ENCODE measurements at regions of chr2 and their contacts with region 1.

Region 1: GRCh38 chr2:100381240-100381639 is 36.2 kb downstream of the CHST10 start:
- DNase-seq: peak; percentile 16
- H3K4me3 ChIP-seq: no peak overlapping the region
- H3K27me3 ChIP-seq: peaks cover 4% of the 10 kb centered on the region
- CTCF ChIP-seq: peak; percentile 91

Region 2: DNA sequence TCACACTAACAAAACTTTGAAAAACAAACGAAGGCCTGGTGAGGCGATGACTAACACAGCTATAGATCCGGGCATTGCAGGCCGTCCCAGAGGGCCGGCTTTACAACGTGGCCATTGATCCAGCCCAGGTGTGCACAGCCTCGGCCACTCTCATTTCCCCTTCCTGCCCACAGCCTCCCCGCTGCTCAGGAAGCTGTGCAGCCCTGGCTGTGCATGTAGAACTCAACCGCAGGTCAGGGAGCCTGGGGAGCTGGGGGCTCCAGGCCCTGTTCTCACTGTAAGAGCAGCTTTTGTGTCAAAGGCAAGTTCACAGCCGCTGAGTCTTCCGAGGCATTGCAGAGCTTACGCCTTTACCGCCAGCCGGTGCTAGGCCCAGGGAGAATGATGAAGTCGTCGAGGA is 146.1 kb before region 1 on chr2:
- CTCF ChIA-PET with region 1: no interaction called
- POLR2A ChIA-PET with region 1: no interaction called
- DNase-seq: no peak
- H3K4me3 ChIP-seq: no peak overlapping the region
- H3K27me3 ChIP-seq: no peaks in the 10 kb centered on the region
- CTCF ChIP-seq: no peak

Region 3: DNA sequence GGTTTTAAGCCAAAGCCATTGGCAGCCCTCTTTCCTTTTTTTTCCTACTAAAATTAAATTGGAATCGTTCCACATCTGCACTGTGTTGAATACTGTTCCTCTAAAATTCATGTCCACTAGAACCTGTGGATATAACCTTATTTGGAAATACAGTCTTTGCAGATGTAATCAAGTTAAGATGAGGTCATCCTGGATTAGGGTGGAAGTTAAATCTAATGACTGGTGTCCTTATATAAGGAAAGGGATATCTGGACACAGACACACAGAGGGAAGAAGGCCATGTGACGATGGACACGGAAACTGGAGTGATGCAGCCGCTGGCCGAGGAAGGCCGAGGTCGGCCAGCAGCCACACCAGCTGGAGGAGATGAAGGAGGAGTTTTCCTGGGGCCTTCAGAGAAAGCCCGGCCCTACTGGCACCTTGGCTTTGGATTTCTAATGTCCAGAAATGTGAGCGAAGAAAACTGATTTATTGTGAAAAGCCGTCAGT is 108.4 kb before region 1 on chr2:
- CTCF ChIA-PET with region 1: interaction called, 224 read pairs
- POLR2A ChIA-PET with region 1: no interaction called
- DNase-seq: no peak
- H3K4me3 ChIP-seq: no peak overlapping the region
- H3K27me3 ChIP-seq: no peaks in the 10 kb centered on the region
- CTCF ChIP-seq: no peak

Region 4: GRCh38 chr2:100285691-100286090 is 95.5 kb before region 1 on chr2:
- CTCF ChIA-PET with region 1: interaction called, 12 read pairs
- POLR2A ChIA-PET with region 1: no interaction called
- DNase-seq: no peak
- H3K4me3 ChIP-seq: no peak overlapping the region
- H3K27me3 ChIP-seq: 0 out of 2 replicates have a peak, but pooled peaks cover 4% of the 10 kb centered on the region
- CTCF ChIP-seq: no peak

Region 5: GRCh38 chr2:100291120-100291970 is 89.9 kb before region 1 on chr2:
- CTCF ChIA-PET with region 1: interaction called, 12 read pairs
- POLR2A ChIA-PET with region 1: no interaction called
- DNase-seq: peak; percentile 61
- H3K4me3 ChIP-seq: no peak overlapping the region
- H3K27me3 ChIP-seq: 0 out of 2 replicates have a peak, but pooled peaks cover 1% of the 10 kb centered on the region
- CTCF ChIP-seq: no peak

Region 6: GRCh38 chr2:100365434-100365833 is 15.8 kb before region 1 on chr2:
- CTCF ChIA-PET with region 1: interaction called, 21 read pairs
- POLR2A ChIA-PET with region 1: no interaction called
- DNase-seq: peak; percentile 55
- H3K4me3 ChIP-seq: no peak overlapping the region
- H3K27me3 ChIP-seq: no peaks in the 10 kb centered on the region
- CTCF ChIP-seq: no peak

Region 7: DNA sequence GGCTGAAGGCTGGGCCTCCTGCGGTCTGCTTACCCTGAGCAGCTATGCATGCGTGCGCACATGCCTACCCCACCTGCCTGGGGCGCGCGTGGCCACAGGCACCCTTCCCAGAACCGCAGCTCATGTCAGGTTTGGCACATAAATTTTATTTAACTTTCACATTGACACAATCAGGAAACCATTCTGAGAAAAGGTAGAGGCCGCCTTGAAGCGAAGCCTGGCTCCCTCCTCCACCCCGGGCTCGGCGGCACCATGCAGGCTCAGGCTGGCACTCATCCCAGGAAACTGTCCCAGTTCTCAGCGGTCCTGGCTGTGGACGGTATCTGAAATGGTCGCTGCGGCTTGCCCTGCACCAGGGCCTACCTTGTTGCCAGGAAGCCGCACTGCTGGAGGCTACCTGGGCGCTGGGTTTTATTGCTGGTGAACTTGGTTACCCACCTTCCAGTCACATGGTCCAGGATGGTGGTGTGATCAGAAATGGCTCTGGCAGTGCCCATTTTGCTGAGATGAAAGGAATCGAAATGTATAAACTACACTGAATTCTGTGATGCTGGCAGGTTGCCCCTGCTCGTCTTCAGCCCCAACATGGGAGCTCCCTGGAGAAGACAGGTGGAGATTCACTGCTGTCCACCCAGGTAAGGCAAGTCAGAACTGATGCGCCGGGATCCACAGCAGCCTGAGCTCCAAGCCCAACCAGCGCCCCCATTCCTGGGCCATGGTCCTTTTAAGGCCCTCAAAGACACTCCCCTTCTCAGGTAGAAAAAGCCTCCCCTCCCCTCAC is 10.7 kb after region 1 on chr2:
- CTCF ChIA-PET with region 1: interaction called, 25 read pairs
- POLR2A ChIA-PET with region 1: no interaction called
- DNase-seq: no peak
- H3K4me3 ChIP-seq: no peak overlapping the region
- H3K27me3 ChIP-seq: no peaks in the 10 kb centered on the region
- CTCF ChIP-seq: no peak

Region 8: GRCh38 chr2:100721693-100722092 is 340.5 kb after region 1 on chr2:
- CTCF ChIA-PET with region 1: no interaction called
- POLR2A ChIA-PET with region 1: no interaction called
- DNase-seq: no peak
- H3K4me3 ChIP-seq: no peak overlapping the region
- H3K27me3 ChIP-seq: peaks cover 10% of the 10 kb centered on the region
- CTCF ChIP-seq: no peak

Measured in BJ (cell line).